ENCODE measurements at regions of chr16 and their contacts with region 1.

Region 1: GRCh38 chr16:84726079-84726668 is 26.4 kb downstream of the USP10 start:
- DNase-seq: peak; percentile 67
- H3K27ac ChIP-seq: peak overlapping the region; percentile 60
- CTCF ChIP-seq: peak; percentile 94

Region 2: DNA sequence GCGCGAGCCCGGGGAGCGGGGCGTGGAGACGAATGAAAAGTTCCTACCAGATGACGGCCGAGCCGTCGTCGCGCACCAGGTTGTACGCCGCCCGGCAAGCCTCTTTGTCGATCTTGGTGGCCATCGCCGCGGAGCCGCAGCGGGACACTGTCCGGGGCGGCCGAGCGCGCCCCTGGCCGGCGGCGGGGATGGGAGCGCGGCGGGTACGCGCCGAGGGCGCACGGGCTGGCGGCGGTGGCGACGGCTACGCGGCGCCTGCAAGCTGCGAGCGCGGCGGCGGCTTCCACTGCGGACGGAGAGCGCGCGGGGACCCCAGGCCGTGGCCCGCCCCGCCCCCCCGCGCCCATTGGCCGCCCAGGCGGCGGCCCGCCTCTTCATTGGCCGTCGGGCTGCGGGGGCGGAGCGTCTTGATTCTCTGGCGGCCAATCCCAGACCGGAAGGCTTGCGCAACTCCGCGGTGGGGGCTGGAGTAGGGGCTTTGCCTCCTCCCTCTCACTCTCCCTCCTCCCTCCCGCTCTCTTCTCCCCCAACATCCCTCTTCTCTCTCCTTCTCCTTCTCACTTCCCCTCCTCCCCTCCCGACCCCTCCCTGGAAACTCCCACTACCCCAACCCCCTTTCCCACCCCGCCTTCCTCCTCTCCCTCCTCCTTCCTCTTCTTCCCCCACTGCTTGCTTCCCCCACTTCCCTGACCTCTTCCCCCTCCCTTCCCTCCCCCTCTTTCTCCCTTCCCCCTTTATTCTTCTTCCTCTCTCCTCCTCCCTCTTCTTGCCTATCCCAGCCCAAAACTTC is 108.2 kb before region 1 on chr16 and contains the start of gene COTL1:
- CTCF ChIA-PET with region 1: interaction called, 15 read pairs
- POLR2A ChIA-PET with region 1: no interaction called
- DNase-seq: peak; percentile 95
- H3K27ac ChIP-seq: peak within 1 kb of the TSS; percentile 96
- CTCF ChIP-seq: no peak

Region 3: DNA sequence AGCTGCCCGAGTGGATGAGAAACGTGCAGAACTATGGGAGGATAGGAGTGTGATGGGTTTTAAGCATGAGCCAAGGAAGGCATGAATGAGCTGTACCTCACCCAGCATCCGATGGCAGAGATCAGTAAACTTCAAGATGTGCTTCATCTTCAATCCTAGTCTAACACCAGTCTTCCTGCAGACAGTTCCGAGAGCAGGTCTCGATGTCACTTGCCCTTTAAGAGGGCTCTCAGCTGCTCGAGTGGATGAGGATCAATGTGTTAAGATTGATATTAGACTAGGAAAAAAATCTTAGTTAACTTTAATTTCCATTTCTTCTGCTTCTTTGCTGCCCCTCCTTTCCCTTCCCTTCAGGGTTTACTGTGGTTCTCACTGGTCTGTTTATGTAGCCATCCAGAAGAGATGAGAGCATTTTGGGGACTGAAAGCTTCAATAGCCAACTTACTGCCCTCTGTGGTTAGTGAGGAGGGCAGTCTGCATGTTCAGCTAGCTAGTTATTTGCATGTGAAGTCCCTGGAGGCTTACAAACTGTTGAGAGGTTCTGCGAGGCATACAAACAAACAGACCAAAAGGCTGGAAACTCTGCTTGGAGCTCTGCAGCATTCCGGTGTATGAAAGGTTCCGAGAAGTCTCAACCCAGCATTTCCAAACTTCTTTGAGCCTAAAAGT is 62.6 kb before region 1 on chr16:
- CTCF ChIA-PET with region 1: interaction called, 10 read pairs
- POLR2A ChIA-PET with region 1: no interaction called
- DNase-seq: no peak
- H3K27ac ChIP-seq: no peak overlapping the region
- CTCF ChIP-seq: no peak

Region 4: DNA sequence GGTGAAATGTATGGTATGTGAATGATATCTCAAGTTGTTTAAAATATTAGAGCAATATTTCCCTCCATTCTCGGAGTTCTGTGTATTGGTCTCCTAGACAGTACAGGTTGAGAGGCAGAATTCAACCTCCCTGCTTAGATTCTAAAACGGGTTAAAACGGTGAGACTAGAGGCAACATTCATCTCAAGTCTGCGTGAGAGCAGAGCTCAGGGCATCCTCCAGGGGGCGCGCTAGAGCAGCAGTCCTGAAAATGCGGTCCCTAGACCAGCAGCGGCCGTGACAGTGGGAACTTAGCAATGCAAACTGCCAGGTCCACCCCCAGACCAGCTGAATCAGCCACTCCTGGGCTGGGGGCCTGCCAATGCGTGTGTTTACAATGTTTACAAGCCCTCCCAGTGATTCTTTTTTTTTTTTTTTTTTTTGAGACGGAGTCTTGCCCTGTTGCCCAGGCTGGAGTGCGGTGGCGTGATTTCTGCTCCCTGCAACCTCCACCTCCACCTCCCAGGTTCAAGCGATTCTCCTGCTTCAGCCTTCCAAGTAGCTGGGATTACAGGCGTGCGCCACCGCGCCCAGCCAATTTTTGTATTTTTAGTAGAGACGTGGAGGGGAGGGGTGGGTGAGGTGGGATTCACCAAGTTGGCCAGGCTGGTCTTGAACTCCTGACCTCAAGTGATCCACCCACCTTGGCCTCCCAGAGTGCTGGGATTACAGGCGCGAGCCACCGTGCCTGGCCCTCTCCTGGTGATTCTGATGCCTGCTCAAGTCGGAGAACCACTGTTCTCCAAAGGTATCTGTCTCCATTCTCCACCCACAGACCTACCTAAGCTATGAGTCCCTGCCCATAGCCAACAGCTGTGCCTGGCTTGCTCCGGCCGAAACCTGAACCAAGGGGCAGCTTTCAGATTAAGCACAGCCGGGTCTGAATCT is 53.6 kb before region 1 on chr16:
- CTCF ChIA-PET with region 1: interaction called, 27 read pairs
- POLR2A ChIA-PET with region 1: no interaction called
- DNase-seq: peak; percentile 64
- H3K27ac ChIP-seq: peak overlapping the region; percentile 32
- CTCF ChIP-seq: peak; percentile 85

Region 5: DNA sequence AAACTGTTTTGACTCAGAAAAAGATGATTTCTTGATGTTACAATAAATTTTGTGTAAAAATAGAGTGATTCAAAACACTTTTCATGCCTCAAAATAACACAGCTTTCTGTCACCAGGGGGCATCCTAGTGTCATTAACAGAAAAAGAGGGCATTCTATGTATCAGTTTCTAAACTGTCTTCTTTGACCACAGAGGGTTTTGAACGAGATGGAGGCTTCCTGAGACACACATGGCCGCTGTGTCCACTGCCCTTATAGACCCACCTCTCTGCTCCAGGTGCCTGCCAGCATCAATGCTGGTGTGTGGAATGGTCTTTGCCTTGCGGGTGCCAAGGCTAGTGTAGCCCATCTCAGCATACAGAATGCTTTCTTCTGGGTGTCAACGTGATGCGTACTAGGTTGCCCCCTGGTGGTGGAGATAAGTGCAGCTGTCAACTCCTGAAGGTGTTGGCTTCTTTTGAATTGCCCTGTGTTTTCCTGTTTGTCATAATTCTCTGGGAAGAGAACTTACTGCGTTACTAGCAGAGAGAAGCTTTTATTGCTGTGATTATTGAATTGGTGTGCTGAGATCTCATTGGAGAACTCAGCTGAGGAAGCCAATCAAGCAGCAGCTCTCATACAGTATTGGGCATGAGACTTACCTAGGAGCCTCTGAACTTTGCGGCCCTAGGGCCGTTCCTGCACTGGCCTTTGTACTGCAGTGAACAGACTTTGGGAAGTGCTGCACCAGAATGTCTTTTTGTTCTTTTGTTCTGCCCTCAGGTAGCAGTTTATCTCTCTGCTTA is 12.3 kb after region 1 on chr16:
- CTCF ChIA-PET with region 1: interaction called, 18 read pairs
- POLR2A ChIA-PET with region 1: no interaction called
- DNase-seq: peak; percentile 68
- H3K27ac ChIP-seq: peak overlapping the region; percentile 70
- CTCF ChIP-seq: peak; percentile 88

Measured in RWPE1 (cell line).